Left lung (tissue), 14 donors: ENCODE measurements at regions of chr3 and their contacts with region 1.

Region 1: GRCh38 chr3:50192689-50193141 is 1.3 kb downstream of the GNAT1 start:
- DNase-seq: peak; percentile 55 to 87 (median 67)
- ATAC-seq: peak; percentile 66
- H3K4me3 ChIP-seq: no peak overlapping the region
- H3K27ac ChIP-seq: no peak overlapping the region
- H3K4me1 ChIP-seq: peaks cover 4 to 29% of the 10 kb centered on the region in 2 donors
- H3K27me3 ChIP-seq: peaks cover 21 to 43% of the 10 kb centered on the region in 2 donors
- CTCF ChIP-seq: peak; percentile 84 to 89

Region 2: DNA sequence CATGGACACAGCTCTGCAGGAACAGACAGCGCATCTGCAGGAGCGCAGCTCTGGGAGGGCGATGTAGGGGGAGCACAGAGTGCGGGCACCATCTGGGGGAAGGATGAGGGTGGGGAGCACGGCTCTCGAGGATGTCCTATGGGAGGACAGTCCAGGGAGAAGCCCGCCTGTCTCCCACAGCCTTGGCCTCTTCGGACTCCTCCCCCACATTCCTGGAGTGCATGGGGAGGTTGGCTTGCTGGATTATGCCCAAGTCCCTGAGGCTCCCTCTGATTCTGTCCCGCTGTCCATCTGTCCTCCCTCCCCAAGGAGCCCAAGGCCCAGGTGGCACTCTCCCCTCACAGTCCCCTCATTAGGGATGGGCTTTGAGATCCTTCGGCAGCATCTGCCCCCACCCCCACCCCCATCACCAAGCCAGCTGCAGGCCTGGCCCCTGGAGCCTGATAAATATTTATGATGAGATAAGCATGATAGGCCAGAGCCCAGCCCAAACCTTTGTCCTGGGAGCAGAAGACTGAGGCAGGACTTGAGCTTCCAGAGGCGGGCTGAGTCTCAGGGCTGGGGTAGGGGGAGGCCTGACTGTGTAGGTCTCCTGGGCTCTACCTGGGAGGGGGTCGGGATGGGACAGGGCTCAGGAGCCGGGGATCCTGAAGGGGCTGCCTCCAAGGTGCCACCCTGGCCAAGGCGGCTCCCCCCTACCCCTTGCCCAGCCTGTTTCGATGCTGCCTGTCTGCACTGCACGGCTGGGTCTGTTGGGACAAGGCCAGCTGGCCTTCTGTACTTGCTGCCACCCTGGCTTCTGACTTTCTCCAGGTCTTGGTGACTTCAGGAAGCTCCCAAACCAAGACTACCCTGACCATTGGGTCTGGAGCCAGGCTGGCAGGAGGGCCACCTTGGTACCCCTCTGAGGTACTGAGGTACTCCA is 66.2 kb before region 1 on chr3:
- intact Hi-C with region 1: loop called in 1 of 2 experiments (anchors 5 kb)
- DNase-seq: peak in 2 of 4 donors; percentile 47 to 62
- ATAC-seq: no peak
- H3K4me3 ChIP-seq: no peak overlapping the region
- H3K27ac ChIP-seq: no peak overlapping the region
- H3K4me1 ChIP-seq: peaks cover 10 to 14% of the 10 kb centered on the region in 2 donors
- H3K27me3 ChIP-seq: no peaks in the 10 kb centered on the region
- CTCF ChIP-seq: no peak

Region 3: DNA sequence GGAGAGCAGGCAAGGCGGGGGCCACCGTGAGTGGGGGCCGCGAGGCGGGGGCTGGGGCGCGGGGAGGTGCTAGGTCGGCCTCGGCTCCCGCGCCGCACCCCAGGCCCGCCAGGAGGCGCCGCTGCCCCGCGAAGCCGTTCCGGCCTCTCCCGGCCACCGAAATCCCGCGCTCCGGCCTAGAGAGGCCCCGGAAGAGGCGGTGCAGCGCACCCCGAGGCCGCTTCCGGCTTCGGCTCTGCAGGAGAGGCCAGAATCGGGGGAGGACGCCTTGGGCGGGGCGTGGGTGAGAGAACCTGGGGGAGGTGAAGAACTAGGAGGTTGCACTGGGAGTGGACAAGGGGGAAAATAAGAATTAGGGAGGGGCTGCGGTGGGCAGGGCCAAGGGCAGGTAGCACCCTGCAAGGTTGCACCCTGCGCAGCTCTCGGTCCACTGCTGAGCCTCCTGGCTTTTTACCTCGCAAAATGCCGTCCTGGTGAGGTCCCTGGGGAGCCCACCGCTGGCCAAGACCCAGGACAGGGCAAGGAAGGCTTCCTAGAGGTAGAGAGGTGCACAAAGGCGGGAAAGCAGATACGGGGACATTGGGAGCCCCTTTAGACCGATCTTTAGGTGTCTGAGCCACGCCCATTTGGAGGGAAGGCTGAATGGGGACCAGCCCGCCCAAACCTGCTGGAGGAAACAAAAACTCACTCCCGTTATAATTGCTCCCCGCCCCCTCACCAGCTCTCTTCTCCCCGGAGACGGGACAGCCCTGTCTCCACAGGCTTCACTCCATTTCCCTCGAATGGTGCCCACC is 34.9 kb after region 1 on chr3:
- intact Hi-C with region 1: loop called in 1 of 2 experiments (anchors 5 kb)
- DNase-seq: peak; percentile 86 to 99 (median 95)
- ATAC-seq: peak; percentile 91
- H3K4me3 ChIP-seq: peak overlapping the region; percentile 66 to 72
- H3K27ac ChIP-seq: peak overlapping the region; percentile 69 to 91
- H3K4me1 ChIP-seq: peaks cover 17 to 48% of the 10 kb centered on the region in 2 donors
- H3K27me3 ChIP-seq: peaks cover 0 to 13% of the 10 kb centered on the region in 2 donors
- CTCF ChIP-seq: peak; percentile 89 to 92

Region 4: GRCh38 chr3:50272911-50273693 is 80.4 kb after region 1 on chr3:
- intact Hi-C with region 1: loop called in 1 of 2 experiments (anchors 5 kb)
- DNase-seq: peak; percentile 79 to 99 (median 87)
- ATAC-seq: peak; percentile 73
- H3K4me3 ChIP-seq: peak overlapping the region; percentile 6 to 31
- H3K27ac ChIP-seq: peak overlapping the region in 1 of 2 donors; percentile 13
- H3K4me1 ChIP-seq: peaks cover 20 to 38% of the 10 kb centered on the region in 2 donors
- H3K27me3 ChIP-seq: peaks cover 0 to 50% of the 10 kb centered on the region in 2 donors
- CTCF ChIP-seq: peak; percentile 97 to 100

Region 5: GRCh38 chr3:50286322-50287230 is 93.9 kb after region 1 on chr3:
- intact Hi-C with region 1: no loop called
- DNase-seq: peak in 1 of 4 donors; percentile 65
- ATAC-seq: no peak
- H3K4me3 ChIP-seq: no peak overlapping the region
- H3K27ac ChIP-seq: no peak overlapping the region
- H3K4me1 ChIP-seq: peaks cover 5 to 7% of the 10 kb centered on the region in 2 donors
- H3K27me3 ChIP-seq: no peaks in the 10 kb centered on the region
- CTCF ChIP-seq: no peak